ENCODE measurements at regions of chr7 and their contacts with region 1.

Region 1: DNA sequence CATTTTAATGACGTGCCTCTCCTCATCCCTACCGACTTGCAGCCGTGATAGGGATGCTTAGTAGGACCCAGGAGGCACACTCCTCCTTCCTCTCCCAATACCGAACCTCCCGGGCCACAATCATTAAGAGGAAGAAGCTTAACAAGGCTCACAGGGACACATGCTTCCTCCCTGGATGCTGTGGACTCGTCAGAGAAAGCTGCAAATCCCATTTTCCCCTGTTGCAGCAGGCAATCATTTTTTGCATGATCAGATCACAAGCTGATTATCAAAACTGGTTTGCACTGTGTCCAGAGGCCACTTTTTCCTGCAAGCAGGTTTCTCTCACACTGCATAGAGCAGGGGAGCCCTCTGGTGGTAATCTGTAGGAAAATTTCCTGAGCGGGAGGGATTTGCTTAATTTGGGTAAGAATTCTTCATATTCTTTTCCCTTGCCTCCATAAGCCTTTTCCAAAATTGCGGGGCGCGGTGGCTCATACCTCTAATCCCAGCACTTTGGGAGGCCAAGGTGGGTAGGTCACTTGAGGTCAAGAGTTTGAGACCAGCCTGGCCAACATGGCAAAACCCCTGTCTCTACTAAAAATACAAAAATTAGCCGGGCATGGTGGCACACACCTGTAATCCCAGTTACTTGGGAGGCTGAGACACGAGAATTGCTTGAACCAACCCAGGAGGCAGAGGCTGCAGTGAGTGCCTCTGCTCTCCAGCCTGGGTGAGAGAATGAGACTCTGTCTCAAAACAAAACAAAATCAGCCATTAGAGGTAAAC is 16.1 kb upstream of the LAMB4 start:
- DNase-seq: peak; percentile 61 to 88
- H3K4me3 ChIP-seq: no peak overlapping the region
- CTCF ChIP-seq: peak in 1 of 3 donors; percentile 65
- POLR2A ChIP-seq: no peak

Region 2: DNA sequence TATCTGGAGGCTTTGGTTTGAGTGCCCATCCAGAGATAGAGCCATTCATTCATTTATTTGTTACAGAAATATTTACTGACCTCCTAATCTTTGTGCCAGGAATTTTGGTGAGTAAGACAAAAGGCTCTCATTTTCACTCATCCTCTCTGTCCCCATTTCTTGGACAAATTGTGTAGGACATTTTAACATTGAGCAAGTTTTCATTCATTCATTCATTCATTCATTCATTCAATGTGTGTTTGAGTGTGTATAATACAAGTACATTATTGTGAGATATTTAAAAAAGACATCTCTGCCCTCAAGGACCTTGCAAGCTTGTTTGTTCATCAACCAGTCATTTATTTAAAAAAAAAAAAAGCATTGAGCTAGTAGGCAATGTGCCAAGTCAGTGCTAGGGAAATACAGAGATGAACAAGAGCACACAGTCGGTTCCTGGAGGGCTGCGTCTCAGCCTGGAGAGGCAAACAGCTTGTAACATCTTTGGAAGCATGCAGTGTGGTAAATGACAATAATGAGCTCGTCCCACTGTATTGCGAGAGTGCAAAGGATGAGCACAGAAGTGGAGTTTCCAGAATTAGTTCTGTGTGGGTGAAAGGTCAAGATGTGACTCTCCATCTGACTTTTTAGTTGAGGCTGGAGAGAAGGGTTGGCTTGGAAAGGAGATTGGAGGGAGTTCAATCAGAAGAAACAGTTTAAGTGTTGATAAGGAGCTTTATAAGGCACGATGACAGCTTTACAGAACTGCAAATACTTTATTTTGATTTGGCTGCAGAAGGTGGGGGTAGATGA is 1027.9 kb before region 1 on chr7:
- intact Hi-C with region 1: no loop called
- DNase-seq: no peak
- H3K4me3 ChIP-seq: no peak overlapping the region
- CTCF ChIP-seq: no peak
- POLR2A ChIP-seq: no peak

Region 3: GRCh38 chr7:108109221-108109908 is 36.9 kb before region 1 on chr7:
- intact Hi-C with region 1: loop called (anchors 5 kb)
- DNase-seq: no peak
- H3K4me3 ChIP-seq: no peak overlapping the region
- CTCF ChIP-seq: no peak
- POLR2A ChIP-seq: no peak